Ascending aorta (tissue), 2 donors: ENCODE measurements at regions of chr9 and their contacts with region 1.

Region 1: GRCh38 chr9:107749787-107750444 is 260.3 kb upstream of the KLF4 start:
- DNase-seq: peak; percentile 86 to 96
- H3K4me3 ChIP-seq: no peak overlapping the region
- H3K27ac ChIP-seq: peak overlapping the region; percentile 92 to 95
- H3K4me1 ChIP-seq: peaks cover 22 to 31% of the 10 kb centered on the region in 2 donors
- H3K27me3 ChIP-seq: no peaks in the 10 kb centered on the region
- CTCF ChIP-seq: no peak

Region 2: DNA sequence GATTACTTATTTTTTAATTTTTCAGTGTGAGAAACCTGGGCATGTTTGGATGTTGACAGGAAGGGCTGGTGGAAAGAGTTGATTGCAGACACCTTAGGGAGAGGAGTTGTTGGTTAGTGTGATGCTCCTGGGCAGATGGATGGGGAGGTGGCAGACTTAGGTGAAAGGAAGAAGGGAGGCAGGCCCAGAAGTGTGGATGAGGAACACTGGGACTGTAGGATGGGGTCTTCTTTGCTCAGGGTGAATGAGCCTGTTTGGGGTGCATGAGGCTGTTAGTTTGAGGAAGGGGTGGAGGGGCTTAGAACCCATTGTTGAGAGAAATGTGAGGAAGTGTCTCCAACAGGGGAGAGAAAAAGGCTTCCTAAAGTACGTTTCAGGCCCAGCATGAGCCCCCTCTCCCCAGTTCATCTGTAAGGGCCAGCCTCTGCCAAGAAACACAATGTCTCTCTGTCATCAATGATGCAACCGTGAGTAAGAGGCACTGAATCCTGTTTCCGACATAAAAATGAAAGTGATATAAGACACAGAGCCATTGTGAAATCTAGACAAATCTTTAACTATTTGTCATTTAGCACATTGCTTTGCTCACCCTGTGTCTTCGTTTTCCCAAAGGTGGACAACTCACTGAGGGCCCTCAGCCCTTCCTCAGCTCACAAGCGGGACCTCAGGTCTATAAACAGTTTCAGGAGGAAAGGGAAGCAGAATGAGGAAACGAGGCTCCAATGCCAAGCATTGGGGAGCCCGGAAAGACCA is 201.7 kb before region 1 on chr9:
- intact Hi-C with region 1: loop called (anchors 5 kb)
- DNase-seq: peak in 1 of 2 donors; percentile 69
- H3K4me3 ChIP-seq: peak overlapping the region in 1 of 2 donors; percentile 48
- H3K27ac ChIP-seq: peak overlapping the region; percentile 34 to 56
- H3K4me1 ChIP-seq: peaks cover 0 to 3% of the 10 kb centered on the region in 2 donors
- H3K27me3 ChIP-seq: no peaks in the 10 kb centered on the region
- CTCF ChIP-seq: no peak

Region 3: GRCh38 chr9:107693625-107694326 is 56.1 kb before region 1 on chr9:
- intact Hi-C with region 1: no loop called
- DNase-seq: no peak
- H3K4me3 ChIP-seq: no peak overlapping the region
- H3K27ac ChIP-seq: no peak overlapping the region
- H3K4me1 ChIP-seq: no peaks in the 10 kb centered on the region
- H3K27me3 ChIP-seq: no peaks in the 10 kb centered on the region
- CTCF ChIP-seq: no peak

Region 4: GRCh38 chr9:108053555-108054061 is 303.7 kb after region 1 on chr9:
- intact Hi-C with region 1: loop called (anchors 5 kb)
- DNase-seq: peak in 1 of 2 donors; percentile 79
- H3K4me3 ChIP-seq: peak overlapping the region in 1 of 2 donors; percentile 17
- H3K27ac ChIP-seq: peak overlapping the region; percentile 40 to 49
- H3K4me1 ChIP-seq: peaks cover 0 to 18% of the 10 kb centered on the region in 2 donors
- H3K27me3 ChIP-seq: no peaks in the 10 kb centered on the region
- CTCF ChIP-seq: no peak

Region 5: DNA sequence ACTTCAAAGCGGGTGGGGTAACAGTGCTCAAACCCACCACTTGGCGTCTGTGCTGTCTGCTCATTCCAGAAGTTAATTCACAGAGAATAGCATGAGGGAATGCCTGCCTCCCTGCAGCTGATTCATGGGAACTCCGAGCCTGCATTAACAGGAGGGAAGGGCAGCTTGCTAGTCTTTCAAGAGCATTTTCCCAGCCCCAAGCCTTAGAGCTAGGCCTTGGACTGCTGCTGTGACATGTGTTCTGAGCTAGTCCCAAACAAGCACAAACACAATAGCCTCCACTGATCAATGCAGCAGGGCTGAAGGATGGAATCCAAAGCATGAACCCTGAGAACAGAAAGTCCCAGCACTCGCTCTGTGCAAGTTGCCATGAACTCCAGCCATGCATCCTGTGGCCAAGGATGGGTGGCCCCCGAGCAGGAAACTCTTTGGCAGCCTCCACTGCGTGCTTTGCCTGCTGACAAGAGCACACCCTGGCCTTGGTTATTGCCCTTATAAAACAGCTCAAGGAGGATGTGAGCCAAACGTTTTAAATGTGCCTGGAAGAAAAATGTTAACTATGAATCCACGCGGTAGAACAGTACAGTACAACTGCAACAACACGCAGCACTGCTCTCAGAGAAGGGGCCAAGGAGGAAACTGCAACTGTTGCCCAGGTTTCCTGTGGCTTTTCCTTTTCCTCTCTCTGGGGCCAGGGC is 392.7 kb after region 1 on chr9:
- intact Hi-C with region 1: loop called (anchors 5 kb)
- DNase-seq: peak; percentile 25 to 93
- H3K4me3 ChIP-seq: no peak overlapping the region
- H3K27ac ChIP-seq: peak overlapping the region; percentile 69 to 80
- H3K4me1 ChIP-seq: peaks cover 5 to 11% of the 10 kb centered on the region in 2 donors
- H3K27me3 ChIP-seq: no peaks in the 10 kb centered on the region
- CTCF ChIP-seq: no peak

Region 6: GRCh38 chr9:108478431-108478837 is 728.5 kb after region 1 on chr9:
- intact Hi-C with region 1: loop called (anchors 5 kb)
- DNase-seq: peak; percentile 25 to 83
- H3K4me3 ChIP-seq: peak overlapping the region in 1 of 2 donors; percentile 38
- H3K27ac ChIP-seq: peak overlapping the region; percentile 88 to 91
- H3K4me1 ChIP-seq: peaks cover 3 to 19% of the 10 kb centered on the region in 2 donors
- H3K27me3 ChIP-seq: no peaks in the 10 kb centered on the region
- CTCF ChIP-seq: no peak